ENCODE measurements at regions of chr18 and their contacts with region 1.

Region 1: GRCh38 chr18:10032331-10033015 is 118.7 kb downstream of the VAPA start:
- DNase-seq: peak; percentile 40
- ATAC-seq: peak; percentile 61
- H3K4me3 Mint-ChIP-seq: peak overlapping the region; percentile 22
- H3K27ac Mint-ChIP-seq: no peak overlapping the region
- H3K4me1 Mint-ChIP-seq: peaks cover 3% of the 10 kb centered on the region
- H3K27me3 Mint-ChIP-seq: peaks cover 4% of the 10 kb centered on the region

Region 2: DNA sequence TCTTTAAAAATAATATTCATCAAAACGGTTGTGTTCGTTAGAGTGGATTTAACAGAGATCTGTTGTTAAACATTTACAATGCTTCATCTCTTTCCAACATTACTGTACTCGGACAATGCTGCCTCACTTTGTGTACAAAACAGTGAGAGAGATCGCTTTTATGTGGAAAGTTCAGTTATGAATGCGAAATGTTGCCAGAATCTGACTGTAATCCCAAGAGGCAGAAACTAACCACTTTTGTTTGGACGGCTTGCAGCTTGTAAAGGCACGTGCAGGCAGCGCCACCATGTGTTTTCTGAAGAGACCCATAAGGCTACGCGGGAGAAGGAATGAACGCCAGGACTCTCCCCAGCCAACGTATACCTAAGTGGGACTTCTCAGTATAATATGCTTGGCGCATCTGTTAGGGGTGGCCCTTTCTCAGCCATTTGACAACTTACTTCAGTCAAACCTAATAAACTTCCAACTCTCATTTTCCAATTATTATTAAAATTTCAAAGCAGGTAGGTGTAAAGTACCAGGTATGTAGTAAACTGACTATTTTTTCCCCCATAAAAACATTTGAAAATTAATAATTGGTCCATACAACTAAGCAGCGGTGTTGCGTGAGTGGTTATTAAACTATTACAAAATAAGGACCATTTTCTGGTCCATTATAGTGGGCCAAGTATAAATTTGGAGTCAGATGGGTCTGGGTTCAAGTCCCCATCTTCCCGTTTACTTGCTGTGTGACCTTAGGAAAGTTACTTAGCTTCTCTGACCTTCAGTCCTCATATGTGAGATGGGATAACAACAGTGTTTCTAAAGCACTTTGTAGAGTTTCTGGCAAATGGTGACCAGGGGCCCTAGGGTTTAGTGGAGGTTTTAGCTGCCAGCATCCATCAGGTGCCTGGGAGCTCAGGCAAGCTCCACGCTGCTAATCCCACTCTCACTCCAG is 487.8 kb after region 1 on chr18:
- CTCF ChIA-PET with region 1: no interaction called
- POLR2A ChIA-PET with region 1: no interaction called
- intact Hi-C with region 1: loop called in 1 of 2 experiments (anchors 2 kb)
- DNase-seq: peak; percentile 83
- ATAC-seq: peak; percentile 92
- H3K4me3 Mint-ChIP-seq: no peak overlapping the region
- H3K27ac Mint-ChIP-seq: no peak overlapping the region
- H3K4me1 Mint-ChIP-seq: peaks cover 16% of the 10 kb centered on the region
- H3K27me3 Mint-ChIP-seq: peaks cover 25% of the 10 kb centered on the region